ENCODE measurements at regions of chr1 and their contacts with region 1.

Region 1: GRCh38 chr1:160681067-160681890 is 30.3 kb downstream of the CD48 start:
- DNase-seq: peak; percentile 82
- H3K4me3 ChIP-seq: no peak overlapping the region
- H3K27ac ChIP-seq: no peak overlapping the region
- H3K4me1 ChIP-seq: no peaks in the 10 kb centered on the region
- H3K27me3 ChIP-seq: no peaks in the 10 kb centered on the region
- CTCF ChIP-seq: peak; percentile 78

Region 2: DNA sequence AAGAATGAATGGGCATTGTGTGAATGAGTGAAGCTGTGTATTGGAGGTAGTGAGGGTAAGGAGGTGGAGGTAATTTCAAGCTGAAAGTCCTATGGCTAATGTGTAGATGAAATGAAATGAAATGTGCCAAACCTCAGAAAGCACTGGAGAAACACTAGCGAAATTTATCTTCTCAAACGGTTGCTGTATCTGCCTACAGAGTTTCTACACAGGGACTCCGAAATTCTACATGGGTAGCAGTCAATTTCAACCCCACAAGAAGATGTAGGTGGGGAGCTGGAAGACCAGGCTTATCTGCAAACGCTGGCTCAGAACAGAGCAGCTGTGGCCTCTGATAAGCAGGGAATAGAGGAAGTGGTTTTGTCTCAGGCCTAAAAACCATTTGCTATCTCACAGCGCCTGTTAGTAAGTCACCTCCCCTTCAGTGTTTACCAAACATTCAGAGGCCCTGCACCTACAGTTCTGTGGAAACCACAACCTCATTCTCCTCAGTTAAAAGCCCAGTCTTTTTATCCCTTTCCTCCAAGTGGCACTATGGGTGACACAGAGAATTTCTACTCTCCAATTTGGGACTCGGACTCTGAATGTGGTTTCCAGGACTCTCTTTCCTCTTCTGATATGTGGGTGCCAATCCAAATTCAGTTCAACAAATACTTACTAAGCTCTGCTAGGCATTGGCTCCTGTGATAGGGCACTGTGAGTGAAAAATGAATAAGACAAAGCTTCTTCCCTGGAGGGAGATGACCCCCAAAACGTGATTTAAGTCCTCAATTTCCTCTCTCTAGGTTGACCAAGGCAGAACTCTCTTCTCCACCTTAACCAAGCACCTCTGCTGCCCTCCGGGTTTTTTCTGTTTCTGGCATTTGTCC is 141.1 kb before region 1 on chr1:
- CTCF ChIA-PET with region 1: no interaction called
- POLR2A ChIA-PET with region 1: no interaction called
- intact Hi-C with region 1: loop called (anchors 10 kb)
- DNase-seq: no peak
- H3K4me3 ChIP-seq: no peak overlapping the region
- H3K27ac ChIP-seq: no peak overlapping the region
- H3K4me1 ChIP-seq: no peaks in the 10 kb centered on the region
- H3K27me3 ChIP-seq: no peaks in the 10 kb centered on the region
- CTCF ChIP-seq: no peak

Region 3: GRCh38 chr1:160704250-160704649 is 23.0 kb after region 1 on chr1:
- CTCF ChIA-PET with region 1: no interaction called
- POLR2A ChIA-PET with region 1: no interaction called
- intact Hi-C with region 1: no loop called
- DNase-seq: no peak
- H3K4me3 ChIP-seq: no peak overlapping the region
- H3K27ac ChIP-seq: no peak overlapping the region
- H3K4me1 ChIP-seq: no peaks in the 10 kb centered on the region
- H3K27me3 ChIP-seq: peaks cover 27% of the 10 kb centered on the region
- CTCF ChIP-seq: no peak

Measured in A673 (cell line).